Dorsolateral prefrontal cortex (tissue), 120 donors: ENCODE measurements at regions of chr11 and their contacts with region 1.

Region 1: GRCh38 chr11:17063171-17064002 is 14.1 kb downstream of the RPS13 start:
- DNase-seq: peak in 9 of 10 donors; percentile 20 to 79 (median 61)
- H3K4me3 ChIP-seq: no peak overlapping the region
- H3K27ac ChIP-seq: no peak overlapping the region
- H3K27me3 ChIP-seq: no peaks in the 10 kb centered on the region
- CTCF ChIP-seq: peak; percentile 33 to 91 (median 79)

Region 2: GRCh38 chr11:16820324-16821092 is 242.9 kb before region 1 on chr11:
- intact Hi-C with region 1: loop called in 1 of 2 experiments (anchors 2 kb)
- DNase-seq: peak in 9 of 10 donors; percentile 62 to 87 (median 81)
- H3K4me3 ChIP-seq: no peak overlapping the region
- H3K27ac ChIP-seq: no peak overlapping the region
- H3K27me3 ChIP-seq: no peaks in the 10 kb centered on the region
- CTCF ChIP-seq: peak; percentile 55 to 93 (median 83)

Region 3: DNA sequence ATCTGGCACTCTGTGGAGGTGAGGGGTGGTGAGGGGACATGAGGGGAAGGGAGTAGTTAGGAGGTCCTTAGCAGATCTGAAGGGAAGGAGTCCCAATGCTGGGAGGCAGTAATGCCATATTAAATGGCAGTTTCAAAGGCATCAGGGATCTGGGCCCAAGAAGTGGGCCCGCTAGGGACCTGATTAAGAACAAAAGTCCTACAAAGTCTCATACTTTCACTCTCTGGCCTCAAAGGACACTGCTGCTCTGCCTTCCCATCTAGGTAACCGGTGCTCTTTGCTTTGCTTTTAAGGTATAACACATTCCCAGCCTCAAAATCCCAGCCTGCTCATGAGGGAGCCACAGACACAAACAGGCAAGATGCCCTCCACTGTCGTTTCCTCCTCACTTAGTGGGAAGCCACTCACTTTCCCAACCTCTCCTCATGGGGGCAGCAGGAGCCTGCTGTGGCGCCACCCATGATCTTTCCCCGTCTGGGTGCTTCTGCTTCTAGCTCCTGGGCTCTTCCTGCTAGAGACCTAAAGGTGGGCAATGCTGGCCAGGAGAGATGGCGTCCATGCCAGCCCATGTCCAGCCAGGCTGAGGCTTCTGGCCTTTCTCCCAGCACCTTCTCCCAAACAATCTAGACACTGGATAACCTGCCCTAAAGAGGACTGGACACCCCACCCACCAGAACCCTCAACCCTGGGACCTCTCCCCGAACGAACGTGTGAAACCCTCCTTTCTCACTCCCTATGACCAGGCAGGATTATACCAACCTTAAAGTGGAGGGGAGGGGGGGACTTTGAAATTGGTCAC is 117.5 kb before region 1 on chr11:
- intact Hi-C with region 1: loop called (anchors 1 to 5 kb)
- DNase-seq: peak in 9 of 10 donors; percentile 7 to 79 (median 60)
- H3K4me3 ChIP-seq: no peak overlapping the region
- H3K27ac ChIP-seq: peak overlapping the region in 4 of 59 donors; percentile 15 to 61 (median 56)
- H3K27me3 ChIP-seq: no peaks in the 10 kb centered on the region
- CTCF ChIP-seq: peak in 54 of 56 donors; percentile 25 to 87 (median 70)

Region 4: GRCh38 chr11:17014838-17015626 is 48.4 kb before region 1 on chr11:
- intact Hi-C with region 1: loop called in 1 of 2 experiments (anchors 10 kb)
- DNase-seq: no peak
- H3K4me3 ChIP-seq: peak overlapping the region; percentile 26 to 86 (median 71)
- H3K27ac ChIP-seq: no peak overlapping the region
- H3K27me3 ChIP-seq: peaks cover 0 to 29% (median 9%) of the 10 kb centered on the region in 45 donors
- CTCF ChIP-seq: peak in 42 of 56 donors; percentile 6 to 57 (median 35)

Region 5: DNA sequence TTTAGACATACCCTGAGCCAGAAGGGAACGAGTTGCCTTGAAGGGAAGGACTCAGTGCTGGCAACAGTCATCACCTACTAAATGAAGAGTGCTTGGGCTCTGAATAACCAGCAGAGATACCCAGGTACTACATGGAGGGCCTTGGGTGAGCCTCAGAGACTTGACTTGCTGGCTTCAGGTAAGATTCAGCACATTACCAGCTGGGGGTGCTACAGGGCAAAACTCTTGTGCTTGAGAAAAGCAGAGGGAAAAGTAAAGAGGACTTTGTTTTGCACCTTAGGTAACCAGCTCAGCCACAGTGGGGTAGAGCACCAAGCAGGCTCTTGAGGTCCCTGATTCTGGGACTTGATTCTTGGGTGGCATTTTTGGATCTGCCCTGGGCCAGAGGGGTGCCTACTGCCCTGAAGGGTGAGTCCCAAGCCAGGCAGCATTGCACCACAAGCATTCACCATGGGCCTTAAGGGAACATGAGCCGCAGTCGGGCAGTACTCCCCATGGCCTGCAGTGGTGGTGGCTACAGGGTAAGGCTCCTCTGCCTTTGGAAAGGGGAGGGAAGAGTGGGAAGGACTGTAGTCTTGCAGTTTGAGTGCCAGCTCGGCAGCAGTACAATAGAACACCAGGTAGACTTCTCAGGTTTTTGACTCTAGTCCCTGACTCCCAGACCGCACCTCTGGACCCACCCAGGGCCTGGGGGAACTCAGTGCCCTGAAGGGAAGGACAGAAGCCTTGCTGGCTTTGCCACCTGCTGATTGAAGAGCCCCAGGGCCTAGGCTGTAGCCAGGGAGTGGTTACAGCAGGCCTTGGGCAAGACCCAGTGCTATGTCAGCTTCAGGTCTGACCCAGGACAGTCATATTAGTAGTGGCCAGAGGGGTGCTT is 26.5 kb before region 1 on chr11:
- intact Hi-C with region 1: no loop called
- DNase-seq: no peak
- H3K4me3 ChIP-seq: no peak overlapping the region
- H3K27ac ChIP-seq: no peak overlapping the region
- H3K27me3 ChIP-seq: peaks cover 0 to 6% (median 0%) of the 10 kb centered on the region in 45 donors
- CTCF ChIP-seq: no peak

Region 6: DNA sequence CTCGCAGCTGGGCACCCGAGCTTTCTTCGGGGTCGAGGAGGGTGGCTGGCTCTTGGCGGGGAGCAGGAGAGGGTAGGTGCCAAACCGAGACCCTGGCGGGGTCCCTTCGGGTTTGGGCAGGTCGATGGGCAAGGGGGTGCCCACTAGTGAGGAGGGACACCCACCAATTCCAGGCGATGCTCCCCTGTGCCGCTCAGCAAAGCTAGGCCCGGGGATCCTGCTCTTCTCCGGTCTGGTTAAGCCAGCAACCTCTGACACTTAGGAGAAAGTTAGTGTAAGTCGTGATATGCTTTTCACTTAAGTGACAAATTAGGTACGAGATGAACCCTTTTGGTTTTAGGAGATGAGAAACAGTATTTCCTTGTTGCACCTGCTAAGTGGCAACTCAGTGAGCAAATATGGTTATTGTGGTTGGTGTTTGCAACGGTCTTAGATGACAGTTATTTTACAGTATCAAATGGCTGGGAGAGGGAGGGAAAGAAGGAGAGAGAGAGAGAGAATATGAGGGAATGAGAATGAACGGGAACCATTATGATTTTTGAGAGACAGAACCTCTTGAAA is 213.7 kb after region 1 on chr11:
- intact Hi-C with region 1: no loop called
- DNase-seq: no peak
- H3K4me3 ChIP-seq: peak overlapping the region; percentile 57 to 98 (median 90)
- H3K27ac ChIP-seq: peak overlapping the region; percentile 39 to 98 (median 90)
- H3K27me3 ChIP-seq: no peaks in the 10 kb centered on the region
- CTCF ChIP-seq: no peak